ENCODE measurements at regions of chr3 and their contacts with region 1.

Region 1: DNA sequence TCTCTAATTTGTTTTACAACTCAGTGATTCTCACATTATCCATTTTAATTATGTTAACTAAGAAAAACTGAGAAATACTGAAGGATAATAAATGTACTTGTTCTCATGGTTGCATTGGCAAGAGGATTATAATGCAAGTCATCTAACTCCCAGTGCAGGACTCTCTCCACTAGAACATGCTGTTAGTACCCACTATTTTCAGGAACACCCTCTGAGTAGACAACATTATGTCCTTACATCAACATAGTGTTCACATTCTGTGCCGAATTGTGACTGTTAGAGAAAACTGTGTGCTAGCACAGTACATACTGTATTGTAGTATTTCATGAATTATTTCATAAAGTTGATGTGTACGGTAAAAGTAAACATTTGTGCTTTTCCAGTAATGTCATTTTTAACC is 80.1 kb downstream of the LEKR1 start:
- DNase-seq: no peak
- ATAC-seq: no peak
- H3K4me3 ChIP-seq: no peak overlapping the region
- H3K4me3 Mint-ChIP-seq: no peak overlapping the region
- H3K27ac ChIP-seq: no peak overlapping the region
- H3K27ac Mint-ChIP-seq: no peak overlapping the region
- H3K4me1 ChIP-seq: no peaks in the 10 kb centered on the region
- H3K4me1 Mint-ChIP-seq: no peaks in the 10 kb centered on the region
- H3K27me3 ChIP-seq: no peaks in the 10 kb centered on the region
- H3K27me3 Mint-ChIP-seq: peaks cover 0 to 42% (median 3%) of the 10 kb centered on the region in 5 donors

Region 2: DNA sequence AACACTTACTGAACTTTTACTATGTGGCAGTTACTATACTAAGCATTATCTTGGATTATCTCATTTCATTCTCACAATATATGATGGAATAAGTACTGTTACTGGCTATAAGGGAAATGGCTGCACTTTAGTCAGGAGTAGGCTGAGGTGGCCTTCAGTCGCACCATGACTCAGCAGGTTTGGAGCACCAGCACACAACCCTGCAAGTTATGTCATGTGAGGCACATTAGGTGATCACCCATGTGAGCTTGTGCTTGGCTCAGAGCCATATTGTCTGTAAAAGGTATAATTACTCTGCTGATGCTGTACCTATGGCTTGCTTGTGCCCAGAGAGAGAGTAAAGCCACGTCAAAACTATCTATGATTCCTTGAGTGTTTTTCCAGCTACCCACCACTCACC is 286.0 kb before region 1 on chr3:
- CTCF ChIA-PET with region 1: no interaction called
- POLR2A ChIA-PET with region 1: no interaction called
- intact Hi-C with region 1: no loop called
- DNase-seq: no peak
- ATAC-seq: no peak
- H3K4me3 ChIP-seq: no peak overlapping the region
- H3K4me3 Mint-ChIP-seq: no peak overlapping the region
- H3K27ac ChIP-seq: no peak overlapping the region
- H3K27ac Mint-ChIP-seq: no peak overlapping the region
- H3K4me1 ChIP-seq: no peaks in the 10 kb centered on the region
- H3K4me1 Mint-ChIP-seq: peaks cover 0 to 8% (median 0%) of the 10 kb centered on the region in 7 donors
- H3K27me3 ChIP-seq: no peaks in the 10 kb centered on the region
- H3K27me3 Mint-ChIP-seq: peaks cover 0 to 7% (median 0%) of the 10 kb centered on the region in 5 donors

Region 3: DNA sequence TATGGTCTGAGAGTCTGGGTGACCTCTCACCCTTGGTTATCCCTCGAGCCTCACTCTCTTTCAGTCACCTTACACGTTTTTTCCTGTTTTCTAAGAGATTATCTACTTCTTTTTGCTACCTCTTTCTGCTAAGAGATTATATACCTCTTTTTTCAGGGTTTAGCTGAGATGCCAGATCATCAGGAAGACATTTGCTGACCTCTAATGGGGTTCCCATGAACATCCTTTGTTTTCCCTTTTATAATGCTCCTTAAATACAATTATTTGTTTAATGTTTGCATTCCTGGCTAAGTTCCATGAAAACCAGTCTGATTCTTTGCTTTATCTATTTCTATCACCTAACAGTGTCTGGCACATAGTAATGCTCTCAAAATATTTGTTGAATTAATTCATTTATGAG is 40.5 kb before region 1 on chr3:
- CTCF ChIA-PET with region 1: no interaction called
- POLR2A ChIA-PET with region 1: no interaction called
- intact Hi-C with region 1: loop called in 1 of 2 experiments (anchors 5 kb)
- DNase-seq: no peak
- ATAC-seq: no peak
- H3K4me3 ChIP-seq: no peak overlapping the region
- H3K4me3 Mint-ChIP-seq: no peak overlapping the region
- H3K27ac ChIP-seq: no peak overlapping the region
- H3K27ac Mint-ChIP-seq: no peak overlapping the region
- H3K4me1 ChIP-seq: no peaks in the 10 kb centered on the region
- H3K4me1 Mint-ChIP-seq: peaks cover 0 to 5% (median 0%) of the 10 kb centered on the region in 7 donors
- H3K27me3 ChIP-seq: no peaks in the 10 kb centered on the region
- H3K27me3 Mint-ChIP-seq: peaks cover 0 to 16% (median 0%) of the 10 kb centered on the region in 5 donors

Measured in naive thymus-derived CD4-positive, alpha-beta T cell (primary cell).